Aorta (tissue), 5 donors: ENCODE measurements at regions of chr16 and their contacts with region 1.

Region 1: GRCh38 chr16:18801197-18801972 is at the start of gene ARL6IP1:
- DNase-seq: peak; percentile 99 to 100
- ATAC-seq: peak; percentile 100
- H3K4me3 ChIP-seq: peak within 1 kb of the TSS; percentile 70 to 85
- H3K27ac ChIP-seq: peak within 1 kb of the TSS; percentile 39 to 76
- H3K4me1 ChIP-seq: peaks cover 0 to 7% of the 10 kb centered on the region in 2 donors
- H3K27me3 ChIP-seq: no peaks in the 10 kb centered on the region
- total RNA-seq, gene ARL6IP1: 58.6 to 69.4 TPM

Region 2: GRCh38 chr16:18853694-18854093 is 52.3 kb after region 1 on chr16:
- intact Hi-C with region 1: loop called in 1 of 2 experiments (anchors 10 kb)
- DNase-seq: no peak
- ATAC-seq: no peak
- H3K4me3 ChIP-seq: no peak overlapping the region
- H3K27ac ChIP-seq: no peak overlapping the region
- H3K4me1 ChIP-seq: no peaks in the 10 kb centered on the region
- H3K27me3 ChIP-seq: no peaks in the 10 kb centered on the region